ENCODE measurements at regions of chr20 and their contacts with region 1.

Region 1: GRCh38 chr20:32652739-32653526 is 20.8 kb downstream of the C20orf203 start:
- DNase-seq: peak; percentile 77 to 94 (median 88)
- ATAC-seq: peak; percentile 99
- H3K4me3 ChIP-seq: peak overlapping the region; percentile 6
- H3K4me3 Mint-ChIP-seq: peak overlapping the region; percentile 49
- H3K27ac ChIP-seq: no peak overlapping the region
- H3K27ac Mint-ChIP-seq: no peak overlapping the region
- H3K4me1 ChIP-seq: peaks cover 15% of the 10 kb centered on the region
- H3K4me1 Mint-ChIP-seq: peaks cover 12% of the 10 kb centered on the region
- H3K27me3 ChIP-seq: no peaks in the 10 kb centered on the region
- H3K27me3 Mint-ChIP-seq: no peaks in the 10 kb centered on the region
- CTCF ChIP-seq: peak; percentile 93

Region 2: GRCh38 chr20:31822421-31823330 is 830.3 kb before region 1 on chr20:
- CTCF ChIA-PET with region 1: no interaction called
- POLR2A ChIA-PET with region 1: no interaction called
- intact Hi-C with region 1: loop called in 1 of 2 experiments (anchors 10 kb)
- DNase-seq: peak; percentile 60 to 86 (median 68)
- ATAC-seq: peak; percentile 86
- H3K4me3 ChIP-seq: peak overlapping the region; percentile 5
- H3K4me3 Mint-ChIP-seq: no peak overlapping the region
- H3K27ac ChIP-seq: no peak overlapping the region
- H3K27ac Mint-ChIP-seq: no peak overlapping the region
- H3K4me1 ChIP-seq: peaks cover 10% of the 10 kb centered on the region
- H3K4me1 Mint-ChIP-seq: no peaks in the 10 kb centered on the region
- H3K27me3 ChIP-seq: peaks cover 0 to 3% of the 10 kb centered on the region in 2 experiments
- H3K27me3 Mint-ChIP-seq: no peaks in the 10 kb centered on the region
- CTCF ChIP-seq: peak; percentile 99

Region 3: GRCh38 chr20:32031007-32031958 is 621.6 kb before region 1 on chr20:
- CTCF ChIA-PET with region 1: no interaction called
- POLR2A ChIA-PET with region 1: no interaction called
- intact Hi-C with region 1: loop called in 1 of 2 experiments (anchors 1 kb)
- DNase-seq: peak; percentile 31 to 77 (median 50)
- ATAC-seq: peak; percentile 76
- H3K4me3 ChIP-seq: peak overlapping the region; percentile 31
- H3K4me3 Mint-ChIP-seq: peak overlapping the region; percentile 36
- H3K27ac ChIP-seq: no peak overlapping the region
- H3K27ac Mint-ChIP-seq: no peak overlapping the region
- H3K4me1 ChIP-seq: peaks cover 15% of the 10 kb centered on the region
- H3K4me1 Mint-ChIP-seq: no peaks in the 10 kb centered on the region
- H3K27me3 ChIP-seq: peaks cover 11 to 23% of the 10 kb centered on the region in 2 experiments
- H3K27me3 Mint-ChIP-seq: peaks cover 68% of the 10 kb centered on the region
- CTCF ChIP-seq: peak; percentile 100

Region 4: GRCh38 chr20:32231847-32232246 is 421.1 kb before region 1 on chr20:
- CTCF ChIA-PET with region 1: no interaction called
- POLR2A ChIA-PET with region 1: no interaction called
- intact Hi-C with region 1: loop called in 1 of 2 experiments (anchors 10 kb)
- DNase-seq: peak in 12 of 14 experiments; percentile 5 to 74 (median 18)
- ATAC-seq: peak; percentile 98
- H3K4me3 ChIP-seq: no peak overlapping the region
- H3K4me3 Mint-ChIP-seq: peak overlapping the region; percentile 61
- H3K27ac ChIP-seq: peak overlapping the region; percentile 36 to 84
- H3K27ac Mint-ChIP-seq: peak overlapping the region; percentile 86
- H3K4me1 ChIP-seq: peaks cover 28% of the 10 kb centered on the region
- H3K4me1 Mint-ChIP-seq: peaks cover 24% of the 10 kb centered on the region
- H3K27me3 ChIP-seq: no peaks in the 10 kb centered on the region
- H3K27me3 Mint-ChIP-seq: no peaks in the 10 kb centered on the region
- CTCF ChIP-seq: no peak

Region 5: GRCh38 chr20:32437391-32438074 is 215.4 kb before region 1 on chr20:
- CTCF ChIA-PET with region 1: no interaction called
- POLR2A ChIA-PET with region 1: no interaction called
- intact Hi-C with region 1: loop called in 1 of 2 experiments (anchors 5 kb)
- DNase-seq: peak in 5 of 14 experiments; percentile 16 to 56 (median 45)
- ATAC-seq: peak; percentile 30
- H3K4me3 ChIP-seq: no peak overlapping the region
- H3K4me3 Mint-ChIP-seq: no peak overlapping the region
- H3K27ac ChIP-seq: no peak overlapping the region
- H3K27ac Mint-ChIP-seq: no peak overlapping the region
- H3K4me1 ChIP-seq: no peaks in the 10 kb centered on the region
- H3K4me1 Mint-ChIP-seq: peaks cover 7% of the 10 kb centered on the region
- H3K27me3 ChIP-seq: no peaks in the 10 kb centered on the region
- H3K27me3 Mint-ChIP-seq: no peaks in the 10 kb centered on the region
- CTCF ChIP-seq: peak; percentile 21

Region 6: DNA sequence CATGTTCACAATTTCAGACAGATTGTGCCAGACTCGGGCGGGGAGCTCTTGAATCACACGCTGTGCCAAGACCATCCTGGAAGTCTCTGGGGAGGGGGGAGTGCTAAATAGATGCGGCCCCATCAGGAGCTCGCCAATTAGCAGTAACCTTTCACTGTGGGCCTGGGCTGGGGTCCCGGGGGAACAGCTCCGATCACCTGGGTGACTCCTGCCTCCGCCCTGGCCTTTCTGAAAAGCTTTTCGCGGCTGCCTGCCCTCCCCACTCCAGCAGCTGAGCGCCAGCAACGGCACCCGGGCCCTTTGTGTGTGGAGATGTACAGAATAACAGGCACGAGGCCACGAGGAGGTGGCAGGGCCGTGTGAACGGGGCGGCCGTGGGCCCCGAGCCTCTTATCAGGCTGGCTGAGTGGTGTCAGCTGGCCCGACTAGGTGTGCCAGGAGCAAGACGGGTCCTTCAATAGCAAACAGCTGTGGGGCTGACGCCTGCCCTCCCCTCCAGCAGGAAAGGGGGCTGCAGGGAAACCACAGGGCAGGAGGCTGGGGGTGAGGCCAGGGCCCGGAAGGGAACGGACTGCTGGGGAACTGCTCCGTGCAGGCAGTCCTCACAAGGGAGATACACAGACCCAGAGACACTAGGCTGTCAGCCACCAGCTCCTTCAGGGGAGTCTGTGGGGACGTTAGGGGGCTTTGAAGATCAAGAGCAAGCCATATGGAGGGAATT is 124.6 kb before region 1 on chr20:
- CTCF ChIA-PET with region 1: interaction called, 75 read pairs
- POLR2A ChIA-PET with region 1: interaction called, 16 read pairs
- intact Hi-C with region 1: no loop called
- DNase-seq: peak in 5 of 14 experiments; percentile 32 to 53 (median 53)
- ATAC-seq: peak; percentile 58
- H3K4me3 ChIP-seq: peak overlapping the region; percentile 3
- H3K4me3 Mint-ChIP-seq: peak overlapping the region; percentile 68
- H3K27ac ChIP-seq: peak overlapping the region; percentile 72 to 74
- H3K27ac Mint-ChIP-seq: peak overlapping the region; percentile 99
- H3K4me1 ChIP-seq: peaks cover 90% of the 10 kb centered on the region
- H3K4me1 Mint-ChIP-seq: peaks cover 88% of the 10 kb centered on the region
- H3K27me3 ChIP-seq: no peaks in the 10 kb centered on the region
- H3K27me3 Mint-ChIP-seq: no peaks in the 10 kb centered on the region
- CTCF ChIP-seq: no peak

Region 7: DNA sequence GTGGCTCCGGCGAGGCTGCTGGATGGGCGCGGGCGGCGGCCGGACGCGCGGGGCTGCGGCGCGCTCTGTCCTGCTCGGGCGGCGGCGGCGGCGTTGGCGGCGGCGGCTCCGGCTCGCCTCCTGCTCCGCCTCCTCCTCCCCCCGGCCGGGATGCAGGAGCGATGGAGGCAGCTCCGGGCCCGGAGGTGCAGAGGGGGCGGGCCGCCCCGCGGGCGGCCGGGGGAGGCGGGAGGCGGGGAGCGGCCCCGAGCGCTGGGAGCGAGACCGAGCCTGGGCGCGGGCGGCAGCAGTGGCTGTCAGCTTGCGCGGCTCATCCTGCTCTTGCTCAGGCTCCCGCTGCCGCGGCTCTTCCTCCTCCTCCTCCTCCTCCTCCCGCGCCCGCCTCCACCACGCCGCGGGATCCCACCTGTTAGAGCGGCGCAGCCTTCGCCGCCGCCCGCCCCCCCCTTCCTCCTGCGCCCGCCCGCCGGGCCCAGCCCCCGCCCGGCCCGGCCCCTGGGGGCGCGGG is 67.9 kb before region 1 on chr20 and contains the start of gene NOL4L:
- CTCF ChIA-PET with region 1: interaction called, 4 read pairs
- POLR2A ChIA-PET with region 1: no interaction called
- intact Hi-C with region 1: loop called (anchors 5 to 10 kb)
- DNase-seq: peak in 13 of 14 experiments; percentile 14 to 75 (median 41)
- ATAC-seq: peak; percentile 38
- H3K4me3 ChIP-seq: peak within 1 kb of the TSS; percentile 62
- H3K4me3 Mint-ChIP-seq: peak within 1 kb of the TSS; percentile 100
- H3K27ac ChIP-seq: peak within 1 kb of the TSS in 1 of 2 donors; percentile 35
- H3K27ac Mint-ChIP-seq: peak within 1 kb of the TSS; percentile 95
- H3K4me1 ChIP-seq: peaks cover 41% of the 10 kb centered on the region
- H3K4me1 Mint-ChIP-seq: peaks cover 45% of the 10 kb centered on the region
- H3K27me3 ChIP-seq: no peaks in the 10 kb centered on the region
- H3K27me3 Mint-ChIP-seq: peaks cover 5% of the 10 kb centered on the region
- CTCF ChIP-seq: no peak
- total RNA-seq, gene NOL4L: 53.1 to 55.6 TPM

Region 8: GRCh38 chr20:32674362-32674789 is 21.4 kb after region 1 on chr20:
- CTCF ChIA-PET with region 1: no interaction called
- POLR2A ChIA-PET with region 1: no interaction called
- intact Hi-C with region 1: no loop called
- DNase-seq: peak; percentile 53 to 84 (median 71)
- ATAC-seq: peak; percentile 78
- H3K4me3 ChIP-seq: no peak overlapping the region
- H3K4me3 Mint-ChIP-seq: no peak overlapping the region
- H3K27ac ChIP-seq: no peak overlapping the region
- H3K27ac Mint-ChIP-seq: no peak overlapping the region
- H3K4me1 ChIP-seq: peaks cover 24% of the 10 kb centered on the region
- H3K4me1 Mint-ChIP-seq: peaks cover 21% of the 10 kb centered on the region
- H3K27me3 ChIP-seq: no peaks in the 10 kb centered on the region
- H3K27me3 Mint-ChIP-seq: no peaks in the 10 kb centered on the region
- CTCF ChIP-seq: peak; percentile 78